Panc1 (cell line): ENCODE measurements at regions of chr2 and their contacts with region 1.

Region 1: GRCh38 chr2:208101716-208102631 is 22.4 kb downstream of the CRYGD start:
- DNase-seq: peak; percentile 43
- ATAC-seq: peak; percentile 90
- H3K4me3 ChIP-seq: no peak overlapping the region
- H3K27ac ChIP-seq: no peak overlapping the region
- H3K4me1 ChIP-seq: no peaks in the 10 kb centered on the region
- H3K27me3 ChIP-seq: no peaks in the 10 kb centered on the region; the same call in 1 of the 2 replicates
- CTCF ChIP-seq: peak; percentile 74; the same call in 1 of the 2 replicates

Region 2: DNA sequence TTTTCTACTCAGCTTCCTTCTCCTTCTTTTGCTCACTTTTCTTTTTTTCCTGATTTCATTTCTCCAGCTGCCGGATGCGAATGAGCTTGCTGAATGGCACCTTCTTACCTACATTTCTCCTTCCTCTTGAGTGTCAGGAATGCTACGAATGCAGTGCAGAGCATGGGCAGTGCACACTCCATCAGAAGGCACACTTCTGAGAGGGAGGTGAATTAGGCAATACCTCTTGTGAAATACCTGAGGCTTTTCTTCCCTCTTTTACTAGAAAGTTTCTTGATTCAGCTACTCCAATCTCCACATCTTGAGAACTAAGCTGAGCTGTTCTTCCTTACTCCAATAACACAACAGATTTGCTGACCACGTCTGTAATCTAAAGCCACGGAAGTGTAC is 127.8 kb before region 1 on chr2:
- CTCF ChIA-PET with region 1: no interaction called
- POLR2A ChIA-PET with region 1: no interaction called
- in situ Hi-C with region 1: no loop called
- intact Hi-C with region 1: no loop called
- DNase-seq: no peak
- ATAC-seq: no peak
- H3K4me3 ChIP-seq: no peak overlapping the region
- H3K27ac ChIP-seq: no peak overlapping the region
- H3K4me1 ChIP-seq: no peaks in the 10 kb centered on the region
- H3K27me3 ChIP-seq: no peaks in the 10 kb centered on the region; the same call in 1 of the 2 replicates
- CTCF ChIP-seq: no peak

Region 3: DNA sequence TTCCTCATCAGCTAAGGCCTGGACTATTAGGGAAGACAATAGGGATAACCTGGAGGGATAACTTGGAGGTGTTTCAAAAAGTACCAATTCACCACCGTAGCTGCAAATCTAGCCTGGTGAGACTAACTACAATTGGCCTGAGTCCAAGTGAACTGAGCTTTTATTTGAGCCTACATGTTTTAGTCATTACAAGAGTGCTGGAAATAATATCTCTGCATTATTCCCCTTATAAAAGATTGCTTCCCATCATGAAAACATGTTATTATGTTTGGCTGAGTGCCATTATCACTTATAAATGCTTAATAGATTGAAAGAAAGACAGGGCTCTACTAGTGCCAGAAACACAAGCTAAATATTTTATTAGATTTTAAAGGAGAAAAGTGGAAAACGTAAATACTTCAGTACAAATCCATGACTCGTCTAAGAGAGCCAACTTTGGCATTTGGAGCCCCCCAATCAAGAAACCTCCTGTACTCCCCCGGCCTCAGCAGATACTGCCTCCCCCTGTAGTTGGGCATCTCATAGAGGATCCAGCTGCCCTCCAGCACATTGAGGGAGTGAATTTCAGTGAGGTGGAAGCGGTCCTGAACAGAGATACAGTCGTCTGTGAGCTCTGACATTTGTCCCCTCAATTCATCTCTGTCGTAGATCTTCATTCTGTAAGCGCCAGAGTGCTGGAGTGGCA is 40.4 kb after region 1 on chr2:
- CTCF ChIA-PET with region 1: interaction called, 16 read pairs
- POLR2A ChIA-PET with region 1: no interaction called
- in situ Hi-C with region 1: no loop called
- intact Hi-C with region 1: no loop called
- DNase-seq: no peak
- ATAC-seq: no peak
- H3K4me3 ChIP-seq: no peak overlapping the region
- H3K27ac ChIP-seq: no peak overlapping the region
- H3K4me1 ChIP-seq: no peaks in the 10 kb centered on the region
- H3K27me3 ChIP-seq: no peaks in the 10 kb centered on the region
- CTCF ChIP-seq: no peak

Region 4: DNA sequence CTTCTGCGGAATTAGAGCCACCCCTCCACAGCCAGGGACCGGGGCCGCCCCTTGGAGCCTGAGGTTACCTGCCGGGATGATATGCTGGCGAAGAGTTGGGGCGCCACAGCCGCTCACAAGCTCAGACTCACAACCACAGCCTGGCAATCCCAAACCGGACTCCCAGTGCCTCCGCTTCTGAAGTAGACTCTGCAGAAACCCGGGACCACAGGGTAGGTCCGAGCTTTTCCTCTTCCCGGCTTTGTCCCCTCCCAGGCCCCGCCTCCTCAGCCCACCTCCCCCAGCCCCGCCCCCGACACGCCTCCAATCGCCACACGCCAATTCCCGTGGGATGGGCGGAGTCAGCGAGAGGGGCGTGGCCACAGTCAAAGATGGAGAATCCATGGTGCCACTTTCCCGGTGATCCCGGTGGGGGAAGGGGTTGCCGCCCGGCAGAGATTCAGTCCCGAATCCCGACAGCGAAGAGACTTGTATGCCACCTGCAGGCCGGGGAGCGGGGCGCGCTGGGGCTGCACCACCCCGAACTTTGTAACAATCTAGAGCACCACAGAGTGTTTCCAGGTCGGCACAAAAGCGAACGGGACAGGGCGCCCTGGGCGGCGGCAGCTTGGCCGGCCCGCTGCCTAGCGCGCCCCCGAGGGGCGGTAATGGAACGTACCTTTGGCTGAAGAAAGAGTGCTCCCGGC is 153.0 kb after region 1 on chr2 and contains the start of gene IDH1:
- CTCF ChIA-PET with region 1: interaction called, 12 read pairs
- POLR2A ChIA-PET with region 1: no interaction called
- in situ Hi-C with region 1: no loop called
- intact Hi-C with region 1: loop called (anchors 2 kb)
- DNase-seq: peak; percentile 71
- ATAC-seq: peak; percentile 89
- H3K4me3 ChIP-seq: peak within 1 kb of the TSS; percentile 100
- H3K27ac ChIP-seq: peak within 1 kb of the TSS; percentile 86
- H3K4me1 ChIP-seq: peaks cover 15% of the 10 kb centered on the region
- H3K27me3 ChIP-seq: no peaks in the 10 kb centered on the region
- CTCF ChIP-seq: peak; percentile 85
- total RNA-seq, gene IDH1: 80.2 TPM

Region 5: GRCh38 chr2:208820014-208820688 is 718.2 kb after region 1 on chr2:
- CTCF ChIA-PET with region 1: no interaction called
- POLR2A ChIA-PET with region 1: no interaction called
- in situ Hi-C with region 1: no loop called
- intact Hi-C with region 1: no loop called
- DNase-seq: no peak
- ATAC-seq: peak; percentile 77
- H3K4me3 ChIP-seq: no peak overlapping the region
- H3K27ac ChIP-seq: no peak overlapping the region
- H3K4me1 ChIP-seq: no peaks in the 10 kb centered on the region
- H3K27me3 ChIP-seq: no peaks in the 10 kb centered on the region
- CTCF ChIP-seq: peak; percentile 35; the same call in 1 of the 2 replicates